ENCODE measurements at regions of chr6 and their contacts with region 1.

Region 1: GRCh38 chr6:81752138-81752920 is at the start of gene TENT5A:
- DNase-seq: peak; percentile 82 to 89 (median 84)
- H3K4me3 ChIP-seq: peak within 1 kb of the TSS; percentile 76 to 81
- H3K4me3 Mint-ChIP-seq: peak within 1 kb of the TSS; percentile 94 to 98 (median 96)
- H3K27ac ChIP-seq: peak within 1 kb of the TSS; percentile 66
- H3K27ac Mint-ChIP-seq: peak within 1 kb of the TSS; percentile 89 to 96 (median 94)
- H3K4me1 ChIP-seq: peaks cover 19% of the 10 kb centered on the region
- H3K4me1 Mint-ChIP-seq: peaks cover 18 to 49% (median 33%) of the 10 kb centered on the region in 4 donors
- H3K27me3 ChIP-seq: no peaks in the 10 kb centered on the region
- H3K27me3 Mint-ChIP-seq: peaks cover 5 to 11% of the 10 kb centered on the region in 2 donors
- total RNA-seq, gene TENT5A: 5.8 to 6.6 TPM

Region 2: GRCh38 chr6:79949233-79949632 is 1803.1 kb before region 1 on chr6:
- CTCF ChIA-PET with region 1: no interaction called
- POLR2A ChIA-PET with region 1: interaction called, 3 read pairs
- intact Hi-C with region 1: loop called (anchors 1 kb)
- DNase-seq: peak; percentile 54 to 69 (median 63)
- H3K4me3 ChIP-seq: no peak overlapping the region
- H3K4me3 Mint-ChIP-seq: peak overlapping the region in 5 of 8 donors; percentile 12 to 64 (median 30)
- H3K27ac ChIP-seq: no peak overlapping the region
- H3K27ac Mint-ChIP-seq: peak overlapping the region in 4 of 7 donors; percentile 43 to 86 (median 60)
- H3K4me1 ChIP-seq: peaks cover 36% of the 10 kb centered on the region
- H3K4me1 Mint-ChIP-seq: peaks cover 17 to 38% (median 21%) of the 10 kb centered on the region in 4 donors
- H3K27me3 ChIP-seq: peaks cover 12% of the 10 kb centered on the region
- H3K27me3 Mint-ChIP-seq: peaks cover 12 to 20% of the 10 kb centered on the region in 2 donors

Region 3: GRCh38 chr6:80106418-80107235 is 1645.7 kb before region 1 on chr6 and contains the start of gene BCKDHB:
- CTCF ChIA-PET with region 1: no interaction called
- POLR2A ChIA-PET with region 1: interaction called, 6 read pairs
- intact Hi-C with region 1: loop called (anchors 1 kb)
- DNase-seq: peak; percentile 98 to 99 (median 98)
- H3K4me3 ChIP-seq: peak within 1 kb of the TSS; percentile 52 to 54
- H3K4me3 Mint-ChIP-seq: peak within 1 kb of the TSS; percentile 87 to 95 (median 92)
- H3K27ac ChIP-seq: peak within 1 kb of the TSS; percentile 50
- H3K27ac Mint-ChIP-seq: peak within 1 kb of the TSS; percentile 76 to 95 (median 92)
- H3K4me1 ChIP-seq: peaks cover 16% of the 10 kb centered on the region
- H3K4me1 Mint-ChIP-seq: peaks cover 12 to 22% (median 18%) of the 10 kb centered on the region in 4 donors
- H3K27me3 ChIP-seq: no peaks in the 10 kb centered on the region
- H3K27me3 Mint-ChIP-seq: peaks cover 1 to 3% of the 10 kb centered on the region in 2 donors
- total RNA-seq, gene BCKDHB: 11.8 to 16.0 TPM

Region 4: GRCh38 chr6:80336911-80337310 is 1415.4 kb before region 1 on chr6:
- CTCF ChIA-PET with region 1: interaction called, 16 read pairs
- POLR2A ChIA-PET with region 1: interaction called, 3 read pairs
- intact Hi-C with region 1: no loop called
- DNase-seq: no peak
- H3K4me3 ChIP-seq: no peak overlapping the region
- H3K4me3 Mint-ChIP-seq: no peak overlapping the region
- H3K27ac ChIP-seq: no peak overlapping the region
- H3K27ac Mint-ChIP-seq: no peak overlapping the region
- H3K4me1 ChIP-seq: no peaks in the 10 kb centered on the region
- H3K4me1 Mint-ChIP-seq: peaks cover 0 to 6% (median under 1%) of the 10 kb centered on the region in 4 donors
- H3K27me3 ChIP-seq: no peaks in the 10 kb centered on the region
- H3K27me3 Mint-ChIP-seq: no peaks in the 10 kb centered on the region

Region 5: DNA sequence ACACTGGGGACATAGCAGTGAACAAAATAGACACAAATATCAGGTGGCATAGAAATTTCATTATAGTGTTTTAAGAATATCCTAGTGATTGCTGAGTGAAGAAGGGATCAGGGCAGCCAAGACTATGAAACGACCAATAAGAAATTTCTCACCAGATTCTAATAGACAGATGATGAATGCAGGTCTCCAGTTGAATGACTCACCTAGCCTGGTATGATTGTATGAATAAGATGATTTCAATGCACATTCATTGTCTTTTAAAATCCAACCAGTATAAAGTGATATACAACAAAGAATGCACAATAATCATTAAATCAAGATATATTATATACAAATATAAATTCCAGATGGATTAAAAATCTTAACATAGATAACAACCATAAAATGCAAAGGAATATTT is 124.6 kb after region 1 on chr6:
- CTCF ChIA-PET with region 1: no interaction called
- POLR2A ChIA-PET with region 1: no interaction called
- intact Hi-C with region 1: no loop called
- DNase-seq: no peak
- H3K4me3 ChIP-seq: no peak overlapping the region
- H3K4me3 Mint-ChIP-seq: no peak overlapping the region
- H3K27ac ChIP-seq: no peak overlapping the region
- H3K27ac Mint-ChIP-seq: no peak overlapping the region
- H3K4me1 ChIP-seq: no peaks in the 10 kb centered on the region
- H3K4me1 Mint-ChIP-seq: no peaks in the 10 kb centered on the region
- H3K27me3 ChIP-seq: no peaks in the 10 kb centered on the region
- H3K27me3 Mint-ChIP-seq: no peaks in the 10 kb centered on the region

Measured in CD4-positive, alpha-beta memory T cell (primary cell).